HAP-1 (cell line): ENCODE measurements at regions of chr20 and their contacts with region 1.

Region 1: DNA sequence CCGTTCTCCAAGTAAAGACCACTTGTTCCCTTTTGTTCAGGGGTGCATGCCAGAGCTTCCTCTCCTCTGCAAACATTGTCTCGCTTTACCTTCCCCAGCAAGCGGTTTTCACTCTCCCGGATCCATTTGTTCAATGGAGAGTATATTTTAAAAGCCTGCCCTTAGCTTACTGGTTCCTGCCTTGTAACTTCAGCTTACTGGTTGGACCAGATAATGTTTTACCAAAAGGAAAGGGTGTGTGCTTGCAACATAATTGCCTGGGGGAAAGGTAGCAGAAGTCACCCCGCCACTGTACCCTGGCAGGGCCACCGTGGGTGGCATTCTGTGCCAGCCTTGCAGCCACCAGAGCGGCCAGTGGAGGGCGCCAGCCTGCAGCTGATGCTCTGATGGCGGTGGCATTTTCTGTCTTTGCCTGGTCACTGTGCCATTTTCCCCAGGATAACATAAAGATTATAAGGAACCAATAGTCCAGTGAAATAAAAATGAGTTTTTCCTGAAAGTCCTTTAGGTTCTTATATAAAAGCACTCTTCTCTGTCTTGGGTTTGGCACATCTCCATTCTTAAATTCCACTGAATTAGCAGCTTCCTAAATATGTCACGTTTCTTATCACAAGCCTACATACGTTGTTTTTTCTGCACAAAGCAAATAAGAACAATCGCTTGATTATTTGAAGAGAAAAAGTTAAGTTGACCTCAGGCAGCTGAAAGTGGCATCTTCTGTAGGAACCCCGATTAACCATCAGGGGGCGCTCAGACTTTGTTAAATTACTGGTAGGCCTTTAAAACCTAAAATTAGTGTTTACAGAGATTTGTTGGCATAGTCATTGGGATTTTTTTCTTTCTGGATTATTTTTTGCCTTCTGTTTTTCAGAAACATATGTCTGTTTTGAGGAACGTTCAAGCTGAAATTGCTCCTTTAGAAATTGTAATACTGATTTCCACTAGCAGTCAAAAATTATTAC is 67.4 kb upstream of the XRN2 start:
- DNase-seq: peak; percentile 65 to 83
- H3K4me3 ChIP-seq: no peak overlapping the region
- H3K4me1 ChIP-seq: peaks cover 10% of the 10 kb centered on the region
- H3K27me3 ChIP-seq: no peaks in the 10 kb centered on the region

Region 2: GRCh38 chr20:20649945-20650344 is 585.8 kb before region 1 on chr20:
- in situ Hi-C with region 1: no loop called
- DNase-seq: no peak
- H3K4me3 ChIP-seq: no peak overlapping the region
- H3K4me1 ChIP-seq: peaks cover 6% of the 10 kb centered on the region
- H3K27me3 ChIP-seq: no peaks in the 10 kb centered on the region

Region 3: DNA sequence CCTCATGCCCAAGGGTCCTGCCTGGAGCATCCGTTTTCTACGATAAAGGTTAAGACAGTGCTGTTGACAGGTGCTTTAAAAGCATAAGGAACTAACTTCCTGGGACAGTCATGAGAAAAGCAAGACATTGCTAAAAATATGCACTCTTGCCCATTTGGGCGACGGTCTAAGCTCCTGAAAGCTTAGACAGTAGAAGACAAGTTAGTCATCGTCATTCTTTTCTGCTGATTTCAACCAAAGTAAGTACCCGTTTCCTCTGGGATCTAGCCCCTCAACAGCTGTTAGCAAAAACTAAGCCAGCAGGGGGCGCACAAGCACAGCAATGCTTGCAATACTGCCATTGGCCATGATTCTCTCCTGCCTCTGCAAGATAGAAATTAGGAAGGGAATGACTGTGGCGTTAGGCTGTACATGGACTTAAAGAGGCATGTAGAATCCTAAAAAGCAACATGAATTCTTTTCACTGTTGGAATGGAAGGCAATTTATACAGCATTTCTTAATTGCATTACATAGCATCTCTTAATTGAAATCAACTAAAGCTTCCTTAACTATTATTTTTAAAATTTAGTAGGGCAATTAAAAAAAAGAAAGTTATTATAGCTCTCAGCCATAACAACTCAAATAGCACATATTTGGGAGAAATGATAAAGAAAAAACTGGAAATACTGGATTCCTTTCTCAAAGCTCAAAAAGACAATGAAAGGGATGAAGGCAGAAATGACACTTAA is 375.5 kb before region 1 on chr20:
- in situ Hi-C with region 1: loop called (anchors 5 kb)
- DNase-seq: peak; percentile 79 to 97
- H3K4me3 ChIP-seq: no peak overlapping the region
- H3K4me1 ChIP-seq: no peaks in the 10 kb centered on the region
- H3K27me3 ChIP-seq: peaks cover 5% of the 10 kb centered on the region; the same call in 1 of the 2 replicates

Region 4: DNA sequence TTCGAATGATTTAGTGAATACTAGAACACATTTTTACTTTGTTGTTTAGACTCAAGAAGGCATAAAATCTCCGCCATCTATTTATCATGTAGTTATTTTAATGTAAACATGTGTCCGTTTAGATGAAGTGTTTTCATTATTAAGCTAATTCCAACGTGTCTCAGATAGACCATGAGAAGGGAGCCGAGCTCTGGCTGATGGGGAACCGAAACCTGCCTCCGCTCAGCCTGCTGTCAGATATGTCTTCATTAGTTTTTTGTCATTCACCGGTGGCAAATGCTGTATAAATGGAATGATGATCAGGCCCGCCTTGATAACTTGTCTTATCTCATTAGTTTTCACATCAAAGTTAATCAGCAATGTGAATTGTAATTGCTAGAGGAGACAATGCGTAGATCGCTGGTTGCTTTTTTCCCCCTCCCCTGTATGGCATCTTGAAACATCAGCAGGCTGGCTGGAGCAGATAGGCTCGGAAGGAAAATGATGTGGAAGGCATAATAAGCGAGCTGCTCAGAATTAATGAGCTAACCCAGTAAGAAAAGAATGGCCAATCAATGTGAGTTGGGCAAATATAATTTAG is 266.0 kb before region 1 on chr20:
- in situ Hi-C with region 1: no loop called
- DNase-seq: no peak
- H3K4me3 ChIP-seq: no peak overlapping the region
- H3K4me1 ChIP-seq: no peaks in the 10 kb centered on the region
- H3K27me3 ChIP-seq: peaks cover 24% of the 10 kb centered on the region

Region 5: DNA sequence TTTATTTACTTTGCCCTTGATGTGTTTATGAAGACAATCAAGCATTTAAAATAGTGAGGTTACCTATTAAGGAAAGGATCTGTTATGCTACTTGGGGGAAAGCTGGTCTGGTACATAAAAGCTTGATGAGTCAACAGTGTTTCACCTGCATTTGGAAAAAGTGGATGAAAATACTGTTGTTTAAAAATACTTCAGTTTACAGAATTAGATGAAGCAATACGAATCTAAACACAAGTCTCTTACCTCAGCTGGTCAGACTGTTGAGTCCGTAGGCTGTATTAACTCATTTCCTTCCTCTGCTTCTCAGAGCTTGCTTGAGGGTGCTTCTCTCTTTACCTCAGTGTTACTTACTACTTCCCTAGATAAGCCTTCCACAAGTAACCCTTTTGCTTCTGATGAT is 125.5 kb after region 1 on chr20:
- in situ Hi-C with region 1: loop called (anchors 10 kb)
- DNase-seq: no peak
- H3K4me3 ChIP-seq: no peak overlapping the region
- H3K4me1 ChIP-seq: no peaks in the 10 kb centered on the region
- H3K27me3 ChIP-seq: no peaks in the 10 kb centered on the region

Region 6: DNA sequence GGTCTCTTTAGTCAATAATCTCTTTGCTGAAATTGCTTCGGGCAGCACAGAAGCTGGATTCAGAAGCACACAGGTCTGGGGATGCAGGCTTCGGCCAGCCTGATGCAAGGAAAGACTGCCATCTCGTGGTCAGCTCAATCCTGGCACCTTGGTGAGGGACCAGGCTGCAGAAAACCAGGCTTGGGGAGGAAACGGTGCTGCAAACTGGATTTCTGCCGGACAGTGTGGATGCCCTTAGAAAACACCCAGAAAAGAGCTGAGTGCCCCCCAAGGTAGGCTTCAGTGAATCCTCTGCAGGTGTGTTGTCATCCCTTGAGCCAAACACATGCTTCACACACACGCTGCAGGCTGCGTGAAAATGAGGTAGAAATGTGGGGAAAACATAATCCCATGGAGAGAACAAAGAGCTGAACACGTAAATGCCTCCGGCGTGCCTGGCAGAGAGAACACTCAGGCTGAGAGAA is 379.9 kb after region 1 on chr20:
- in situ Hi-C with region 1: loop called (anchors 10 kb)
- DNase-seq: peak; percentile 61 to 80
- H3K4me3 ChIP-seq: no peak overlapping the region
- H3K4me1 ChIP-seq: no peaks in the 10 kb centered on the region
- H3K27me3 ChIP-seq: peaks cover 8% of the 10 kb centered on the region